A673 (cell line): ENCODE measurements at regions of chr17 and their contacts with region 1.

Region 1: GRCh38 chr17:74361230-74362068 is at the start of gene BTBD17:
- DNase-seq: peak; percentile 75
- H3K4me3 ChIP-seq: peak within 1 kb of the TSS; percentile 35
- H3K27ac ChIP-seq: peak within 1 kb of the TSS; percentile 70
- H3K4me1 ChIP-seq: peaks cover 25% of the 10 kb centered on the region
- H3K27me3 ChIP-seq: peaks cover 14% of the 10 kb centered on the region
- CTCF ChIP-seq: peak; percentile 65
- total RNA-seq, gene BTBD17: 3.3 and 3.4 TPM in 2 replicates

Region 2: DNA sequence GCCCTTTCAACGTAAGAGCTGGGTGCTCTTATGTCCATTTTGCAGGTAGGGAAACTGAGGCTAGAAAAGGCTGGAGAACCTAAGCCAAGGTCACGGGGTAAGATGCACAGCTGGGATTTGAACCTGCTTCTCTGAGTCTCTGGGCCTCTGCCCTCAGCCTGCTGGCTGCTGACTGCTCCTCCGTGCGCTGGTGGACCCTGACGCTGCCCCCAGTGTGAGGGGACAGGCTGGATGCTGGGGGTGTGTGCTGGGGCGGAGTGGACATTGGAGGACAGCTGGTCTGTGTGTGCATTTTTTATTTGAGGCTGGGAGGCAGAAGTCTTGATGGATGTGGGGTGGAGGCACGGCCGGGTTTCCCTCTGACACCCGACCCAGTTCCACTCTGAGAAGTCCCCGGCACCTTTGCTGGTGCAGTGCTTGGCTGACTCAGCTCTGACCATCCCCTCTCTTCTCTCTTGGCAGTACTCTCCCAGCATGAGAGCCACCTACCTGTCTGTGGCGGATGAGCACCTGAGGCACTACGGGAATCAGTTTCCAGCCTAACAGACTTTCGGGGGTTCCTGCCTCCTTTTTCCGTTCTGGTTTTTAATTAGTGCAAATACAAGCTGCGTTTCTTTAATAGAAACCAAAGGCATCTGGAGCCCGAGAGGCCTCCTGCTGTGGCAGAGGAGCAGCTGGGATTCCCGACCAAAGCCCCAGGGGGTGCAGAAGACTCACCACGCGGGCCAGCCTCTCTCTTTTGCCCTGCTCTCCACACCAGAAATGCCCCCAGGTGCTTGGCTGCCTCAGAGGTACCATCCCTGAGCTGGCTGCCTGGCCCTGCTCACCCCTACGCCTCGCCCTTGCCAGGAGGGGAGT is 101.6 kb before region 1 on chr17:
- CTCF ChIA-PET with region 1: interaction called, 10 read pairs
- POLR2A ChIA-PET with region 1: no interaction called
- intact Hi-C with region 1: no loop called
- DNase-seq: peak; percentile 46
- H3K4me3 ChIP-seq: no peak overlapping the region
- H3K27ac ChIP-seq: no peak overlapping the region
- H3K4me1 ChIP-seq: peaks cover 10% of the 10 kb centered on the region
- H3K27me3 ChIP-seq: no peaks in the 10 kb centered on the region
- CTCF ChIP-seq: no peak

Region 3: DNA sequence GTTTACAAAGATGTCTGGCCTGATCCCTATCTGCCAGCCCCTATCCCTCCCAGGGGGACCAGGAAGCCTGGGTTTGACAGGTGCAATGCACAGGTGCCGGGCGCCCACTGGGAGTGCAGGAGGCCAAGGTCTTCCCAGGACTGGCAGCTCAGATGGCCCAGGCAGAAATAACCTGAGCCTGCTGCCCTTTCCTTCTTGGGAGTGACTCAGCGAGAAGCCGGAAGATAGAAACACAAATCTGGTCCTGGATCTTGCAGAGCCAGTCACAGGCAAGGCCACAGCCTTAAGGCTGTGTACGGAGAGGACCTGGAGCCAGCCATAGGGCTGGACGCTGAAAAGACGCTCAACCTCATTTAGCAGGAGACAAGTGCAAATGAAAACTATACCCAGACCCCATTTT is 33.5 kb after region 1 on chr17:
- CTCF ChIA-PET with region 1: no interaction called
- POLR2A ChIA-PET with region 1: no interaction called
- intact Hi-C with region 1: no loop called
- DNase-seq: no peak
- H3K4me3 ChIP-seq: no peak overlapping the region
- H3K27ac ChIP-seq: no peak overlapping the region
- H3K4me1 ChIP-seq: peaks cover 11% of the 10 kb centered on the region
- H3K27me3 ChIP-seq: no peaks in the 10 kb centered on the region
- CTCF ChIP-seq: no peak